Natural killer cell (primary cell): ENCODE measurements at regions of chr16 and their contacts with region 1.

Region 1: GRCh38 chr16:67053767-67054334 is 24.9 kb downstream of the CBFB start:
- DNase-seq: peak in 1 of 2 donors; percentile 43
- ATAC-seq: peak in 2 of 3 donors; percentile 17 to 41
- H3K4me3 ChIP-seq: no peak overlapping the region
- H3K4me3 Mint-ChIP-seq: peak overlapping the region; percentile 81
- H3K27ac ChIP-seq: peak overlapping the region; percentile 50
- H3K27ac Mint-ChIP-seq: peak overlapping the region; percentile 86 to 87
- H3K4me1 ChIP-seq: peaks cover 21% of the 10 kb centered on the region
- H3K4me1 Mint-ChIP-seq: peaks cover 37 to 41% of the 10 kb centered on the region in 2 donors
- H3K27me3 ChIP-seq: no peaks in the 10 kb centered on the region
- H3K27me3 Mint-ChIP-seq: no peaks in the 10 kb centered on the region
- CTCF ChIP-seq: no peak

Region 2: DNA sequence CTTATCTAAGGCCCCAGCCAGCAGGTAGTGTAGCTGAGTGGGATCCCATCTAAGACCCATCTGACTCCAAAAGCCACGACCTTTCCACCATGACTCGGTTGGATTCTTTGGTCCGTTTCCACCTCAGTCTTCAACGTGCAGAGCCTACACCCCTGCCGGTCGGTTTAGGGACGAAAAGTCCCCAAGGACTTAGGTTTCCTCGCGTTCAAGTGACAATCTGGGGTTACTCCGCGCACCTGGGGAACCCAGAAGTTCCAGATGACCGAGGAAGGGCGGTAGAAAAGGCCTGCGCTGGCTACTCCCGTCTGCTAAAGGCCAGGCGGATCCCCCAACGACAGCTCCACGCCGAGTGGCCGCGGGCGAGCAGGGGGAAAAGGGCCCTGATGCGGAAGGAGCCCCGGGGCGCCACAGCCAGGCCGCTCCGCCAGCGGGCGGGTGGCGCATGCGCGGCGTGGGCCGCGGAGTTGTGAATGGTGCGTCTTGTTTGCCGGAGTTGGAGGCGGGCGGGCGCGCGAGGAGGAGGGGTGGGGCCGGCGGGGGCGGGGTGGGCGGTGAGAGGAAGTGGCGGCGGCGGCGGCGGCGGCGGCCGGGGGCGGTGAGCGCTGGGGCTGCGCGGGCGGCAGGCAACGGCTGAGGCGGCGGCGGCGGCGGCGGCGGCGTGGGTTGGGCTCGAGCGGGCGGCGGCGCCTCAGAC is 25.1 kb before region 1 on chr16 and contains the start of gene CBFB:
- intact Hi-C with region 1: loop called (anchors 1 kb)
- DNase-seq: peak; percentile 90 to 98
- ATAC-seq: peak; percentile 89 to 95 (median 91)
- H3K4me3 ChIP-seq: peak within 1 kb of the TSS; percentile 55
- H3K4me3 Mint-ChIP-seq: peak within 1 kb of the TSS; percentile 87
- H3K27ac ChIP-seq: peak within 1 kb of the TSS; percentile 96
- H3K27ac Mint-ChIP-seq: peak within 1 kb of the TSS; percentile 89
- H3K4me1 ChIP-seq: peaks cover 18% of the 10 kb centered on the region
- H3K4me1 Mint-ChIP-seq: peaks cover 20 to 29% of the 10 kb centered on the region in 2 donors
- H3K27me3 ChIP-seq: no peaks in the 10 kb centered on the region
- H3K27me3 Mint-ChIP-seq: no peaks in the 10 kb centered on the region
- CTCF ChIP-seq: no peak
- total RNA-seq, gene CBFB: 96.1 to 102 (median 97.2) TPM